Mammary epithelial cell (primary cell): ENCODE measurements at regions of chr4 and their contacts with region 1.

Region 1: DNA sequence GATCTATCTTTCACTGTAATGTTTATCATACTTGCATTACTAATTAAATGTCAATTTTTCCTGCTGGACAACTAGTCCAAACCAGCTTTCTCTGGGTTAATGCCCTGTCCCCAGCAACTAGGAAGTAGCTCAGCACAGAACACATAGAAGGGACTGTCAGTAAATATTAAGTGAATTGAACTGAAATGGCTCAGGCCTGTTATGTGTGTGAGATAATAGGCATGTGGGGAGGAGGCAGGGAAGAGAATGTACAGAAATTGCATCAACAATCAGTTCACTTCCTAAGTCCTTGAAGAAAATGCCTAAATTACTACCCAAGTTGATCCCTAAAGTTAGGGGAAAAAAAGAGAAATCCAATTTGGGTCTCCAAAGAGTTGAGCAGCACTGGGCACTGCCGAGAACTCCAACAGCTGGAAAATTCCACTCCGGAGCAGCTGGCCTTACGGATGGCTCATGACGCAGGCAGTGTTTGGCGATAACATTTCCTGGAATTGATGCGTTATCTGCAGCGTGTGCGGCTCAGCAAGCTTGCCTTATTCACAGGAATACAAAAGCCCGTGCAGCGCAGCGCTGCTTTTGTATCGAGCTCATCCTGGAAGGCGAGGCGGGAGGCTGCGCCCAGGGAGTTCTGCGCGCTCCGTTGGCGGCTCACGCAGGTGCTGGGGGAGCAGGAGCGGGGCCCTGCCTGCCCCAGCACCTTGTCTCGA is 297.3 kb upstream of the LCORL start:
- DNase-seq: no peak
- H3K4me3 ChIP-seq: no peak overlapping the region
- H3K27ac ChIP-seq: no peak overlapping the region
- H3K4me1 ChIP-seq: no peaks in the 10 kb centered on the region
- H3K27me3 ChIP-seq: no peaks in the 10 kb centered on the region
- CTCF ChIP-seq: no peak

Region 2: GRCh38 chr4:18214411-18215055 is 104.3 kb before region 1 on chr4:
- CTCF ChIA-PET with region 1: no interaction called
- dilution Hi-C with region 1: loop called (anchors 5 kb)
- in situ Hi-C with region 1: no loop called
- intact Hi-C with region 1: no loop called
- DNase-seq: no peak
- H3K4me3 ChIP-seq: no peak overlapping the region
- H3K27ac ChIP-seq: no peak overlapping the region
- H3K4me1 ChIP-seq: no peaks in the 10 kb centered on the region
- H3K27me3 ChIP-seq: no peaks in the 10 kb centered on the region
- CTCF ChIP-seq: no peak

Region 3: GRCh38 chr4:18262832-18263231 is 56.0 kb before region 1 on chr4:
- CTCF ChIA-PET with region 1: no interaction called
- dilution Hi-C with region 1: no loop called
- in situ Hi-C with region 1: no loop called
- intact Hi-C with region 1: no loop called
- DNase-seq: no peak
- H3K4me3 ChIP-seq: no peak overlapping the region
- H3K27ac ChIP-seq: no peak overlapping the region
- H3K4me1 ChIP-seq: no peaks in the 10 kb centered on the region
- H3K27me3 ChIP-seq: no peaks in the 10 kb centered on the region
- CTCF ChIP-seq: no peak

Region 4: DNA sequence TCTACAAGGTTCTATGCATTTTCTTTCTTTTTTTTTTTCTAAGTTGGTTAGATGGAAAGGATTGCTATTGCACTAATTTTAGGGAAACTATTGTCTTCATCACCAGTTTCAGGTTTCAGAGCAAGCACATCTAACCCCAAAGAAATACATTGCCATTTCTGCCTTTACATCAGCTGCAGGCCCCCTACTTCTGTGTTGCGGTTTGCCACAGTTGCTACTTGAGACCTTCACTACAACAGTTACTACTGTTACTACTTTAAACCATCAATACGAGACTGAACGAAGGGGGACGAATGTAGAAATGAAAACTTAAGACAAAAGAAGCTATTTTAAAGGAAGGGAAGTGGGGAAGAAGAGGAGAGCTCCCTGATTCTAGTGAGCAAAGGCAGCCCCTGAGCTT is 40.6 kb before region 1 on chr4:
- CTCF ChIA-PET with region 1: no interaction called
- dilution Hi-C with region 1: no loop called
- in situ Hi-C with region 1: no loop called
- intact Hi-C with region 1: no loop called
- DNase-seq: no peak
- H3K4me3 ChIP-seq: no peak overlapping the region
- H3K27ac ChIP-seq: no peak overlapping the region
- H3K4me1 ChIP-seq: no peaks in the 10 kb centered on the region
- H3K27me3 ChIP-seq: no peaks in the 10 kb centered on the region
- CTCF ChIP-seq: no peak